ENCODE measurements at regions of chr11 and their contacts with region 1.

Region 1: GRCh38 chr11:78000193-78000592 is 5.7 kb upstream of the INTS4 start:
- DNase-seq: peak; percentile 65
- H3K4me3 Mint-ChIP-seq: no peak overlapping the region
- H3K27ac Mint-ChIP-seq: no peak overlapping the region
- H3K4me1 Mint-ChIP-seq: peaks cover 3% of the 10 kb centered on the region
- H3K27me3 Mint-ChIP-seq: peaks cover 25% of the 10 kb centered on the region

Region 2: DNA sequence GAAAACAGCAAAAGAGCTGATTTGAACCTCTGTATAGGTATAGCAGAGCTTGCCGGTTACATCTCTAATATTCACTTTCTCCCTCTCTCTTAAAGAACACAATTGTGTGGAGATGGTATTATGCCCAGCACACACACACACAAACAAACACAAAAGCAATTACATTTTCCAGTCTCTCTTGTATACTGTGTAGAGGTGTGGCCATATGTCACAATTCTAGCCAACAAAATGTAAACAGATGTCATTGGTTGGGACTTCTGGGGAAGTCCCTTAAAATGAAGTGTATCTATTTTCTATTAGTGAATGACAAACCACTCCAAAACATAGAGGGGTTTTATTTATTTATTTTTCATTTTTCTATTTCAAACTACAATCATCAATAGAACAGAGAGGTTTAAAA is 10.1 kb after region 1 on chr11:
- CTCF ChIA-PET with region 1: interaction called, 13 read pairs
- DNase-seq: no peak
- H3K4me3 Mint-ChIP-seq: no peak overlapping the region
- H3K27ac Mint-ChIP-seq: no peak overlapping the region
- H3K4me1 Mint-ChIP-seq: no peaks in the 10 kb centered on the region
- H3K27me3 Mint-ChIP-seq: peaks cover 4% of the 10 kb centered on the region

Region 3: DNA sequence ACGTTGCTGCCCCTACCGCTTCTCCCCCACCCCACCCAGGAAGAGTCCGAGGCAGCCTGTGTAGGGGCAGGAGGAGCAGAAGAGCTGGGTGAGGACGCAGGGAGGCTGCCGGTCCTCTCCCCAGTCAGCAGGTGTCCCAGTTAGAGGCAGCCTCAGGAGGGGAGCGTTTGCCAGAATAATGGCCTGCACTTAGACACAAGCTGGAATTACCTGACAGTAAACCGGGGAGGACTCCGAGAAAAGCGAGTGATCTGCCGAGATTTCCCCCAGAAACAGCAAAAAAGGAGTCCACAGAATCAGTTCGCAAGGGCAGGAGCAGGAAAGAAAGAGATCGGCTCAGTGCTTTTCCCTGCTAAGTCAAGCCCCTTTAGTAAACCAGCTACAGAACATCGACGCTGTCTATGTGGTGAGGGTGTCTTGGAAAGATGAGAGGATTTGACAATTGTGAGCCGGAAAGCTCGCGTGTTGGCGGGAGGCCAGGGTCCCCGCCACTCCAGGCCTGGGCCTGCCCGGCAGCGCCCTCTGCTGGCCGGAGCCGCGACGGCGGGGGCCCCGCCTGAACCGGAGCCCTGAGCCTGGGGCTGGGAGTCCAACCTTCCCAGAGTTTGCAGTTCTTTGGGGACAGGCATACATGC is 45.8 kb after region 1 on chr11:
- CTCF ChIA-PET with region 1: interaction called, 25 read pairs
- DNase-seq: peak; percentile 75
- H3K4me3 Mint-ChIP-seq: no peak overlapping the region
- H3K27ac Mint-ChIP-seq: no peak overlapping the region
- H3K4me1 Mint-ChIP-seq: peaks cover 16% of the 10 kb centered on the region
- H3K27me3 Mint-ChIP-seq: peaks cover 13% of the 10 kb centered on the region

Measured in activated naive CD4-positive, alpha-beta T cell treated with anti-CD3 and anti-CD28 coated beads, Interleukin-2, amount 10 ng/mL, durations not matched to agents 7 days and 5 days (primary cell).